Activated CD8-positive, alpha-beta T cell treated with anti-CD3 and anti-CD28 coated beads, Interleukin-2, amount 10 ng/mL, durations not matched to agents 7 days and 5 days (primary cell): ENCODE measurements at regions of chr1 and their contacts with region 1.

Region 1: GRCh38 chr1:209248649-209249279 is 334.8 kb upstream of the CAMK1G start:
- DNase-seq: peak; percentile 65
- ATAC-seq: peak; percentile 55
- H3K4me3 Mint-ChIP-seq: no peak overlapping the region
- H3K27ac Mint-ChIP-seq: no peak overlapping the region
- H3K4me1 Mint-ChIP-seq: no peaks in the 10 kb centered on the region
- H3K27me3 Mint-ChIP-seq: no peaks in the 10 kb centered on the region

Region 2: DNA sequence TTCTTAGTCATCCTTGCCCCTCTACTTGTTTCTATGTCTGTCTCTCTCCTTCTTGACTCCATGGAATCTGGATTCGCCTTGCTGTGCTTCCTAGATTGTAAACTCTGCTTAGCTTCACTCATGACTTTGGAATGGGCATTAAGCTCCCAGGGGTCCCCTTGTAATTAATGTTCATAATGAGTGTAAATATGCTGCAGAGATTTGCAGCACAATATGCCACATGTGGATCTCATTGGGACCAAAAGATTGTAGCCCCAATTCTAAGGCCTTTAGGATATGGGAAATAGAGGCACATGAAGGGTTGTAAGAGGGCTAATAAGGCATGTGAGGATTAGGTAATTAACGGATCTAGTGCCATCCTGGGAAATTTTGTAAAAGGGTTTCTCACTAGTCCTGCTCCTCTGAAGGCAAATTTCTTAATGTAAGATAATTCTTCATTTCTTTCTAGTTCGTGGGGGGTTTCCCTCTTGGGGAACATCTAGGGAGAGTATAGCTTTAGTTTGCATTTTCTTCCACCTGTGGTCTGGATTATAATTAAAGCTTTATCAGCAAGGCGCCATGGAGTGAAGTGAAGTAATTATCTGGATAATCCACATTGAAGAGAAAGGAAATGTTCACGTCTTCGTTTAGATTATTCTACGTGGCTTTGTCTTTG is 345.4 kb before region 1 on chr1:
- CTCF ChIA-PET with region 1: no interaction called
- POLR2A ChIA-PET with region 1: no interaction called
- DNase-seq: no peak
- ATAC-seq: no peak
- H3K4me3 Mint-ChIP-seq: no peak overlapping the region
- H3K27ac Mint-ChIP-seq: no peak overlapping the region
- H3K4me1 Mint-ChIP-seq: no peaks in the 10 kb centered on the region
- H3K27me3 Mint-ChIP-seq: no peaks in the 10 kb centered on the region

Region 3: GRCh38 chr1:209238356-209238755 is 10.4 kb before region 1 on chr1:
- CTCF ChIA-PET with region 1: interaction called, 13 read pairs
- POLR2A ChIA-PET with region 1: no interaction called
- DNase-seq: no peak
- ATAC-seq: no peak
- H3K4me3 Mint-ChIP-seq: no peak overlapping the region
- H3K27ac Mint-ChIP-seq: no peak overlapping the region
- H3K4me1 Mint-ChIP-seq: no peaks in the 10 kb centered on the region
- H3K27me3 Mint-ChIP-seq: no peaks in the 10 kb centered on the region

Region 4: GRCh38 chr1:209260136-209260535 is 11.4 kb after region 1 on chr1:
- CTCF ChIA-PET with region 1: interaction called, 17 read pairs
- POLR2A ChIA-PET with region 1: no interaction called
- DNase-seq: no peak
- ATAC-seq: no peak
- H3K4me3 Mint-ChIP-seq: no peak overlapping the region
- H3K27ac Mint-ChIP-seq: no peak overlapping the region
- H3K4me1 Mint-ChIP-seq: no peaks in the 10 kb centered on the region
- H3K27me3 Mint-ChIP-seq: no peaks in the 10 kb centered on the region

Region 5: DNA sequence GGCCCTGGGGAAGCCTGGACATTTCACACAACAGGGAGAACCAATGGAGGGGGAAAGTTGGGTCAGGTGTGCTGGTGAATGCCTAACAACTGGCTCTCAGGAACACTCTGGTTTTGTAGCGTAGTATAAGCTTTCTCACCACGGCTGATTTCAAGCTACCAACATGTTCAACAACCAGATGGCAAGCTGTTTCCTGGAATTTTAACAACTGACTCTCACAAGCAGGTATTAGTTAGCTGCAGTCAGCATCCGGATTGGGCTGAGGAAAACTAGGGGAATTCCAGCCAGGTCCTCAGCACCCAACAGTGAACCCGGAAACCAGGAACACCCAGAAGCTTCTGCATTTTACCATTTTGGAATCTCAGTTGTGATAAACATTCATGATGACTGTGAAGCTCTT is 172.4 kb after region 1 on chr1:
- CTCF ChIA-PET with region 1: no interaction called
- POLR2A ChIA-PET with region 1: no interaction called
- DNase-seq: no peak
- ATAC-seq: no peak
- H3K4me3 Mint-ChIP-seq: no peak overlapping the region
- H3K27ac Mint-ChIP-seq: no peak overlapping the region
- H3K4me1 Mint-ChIP-seq: peaks cover 6% of the 10 kb centered on the region
- H3K27me3 Mint-ChIP-seq: peaks cover 7% of the 10 kb centered on the region

Region 6: DNA sequence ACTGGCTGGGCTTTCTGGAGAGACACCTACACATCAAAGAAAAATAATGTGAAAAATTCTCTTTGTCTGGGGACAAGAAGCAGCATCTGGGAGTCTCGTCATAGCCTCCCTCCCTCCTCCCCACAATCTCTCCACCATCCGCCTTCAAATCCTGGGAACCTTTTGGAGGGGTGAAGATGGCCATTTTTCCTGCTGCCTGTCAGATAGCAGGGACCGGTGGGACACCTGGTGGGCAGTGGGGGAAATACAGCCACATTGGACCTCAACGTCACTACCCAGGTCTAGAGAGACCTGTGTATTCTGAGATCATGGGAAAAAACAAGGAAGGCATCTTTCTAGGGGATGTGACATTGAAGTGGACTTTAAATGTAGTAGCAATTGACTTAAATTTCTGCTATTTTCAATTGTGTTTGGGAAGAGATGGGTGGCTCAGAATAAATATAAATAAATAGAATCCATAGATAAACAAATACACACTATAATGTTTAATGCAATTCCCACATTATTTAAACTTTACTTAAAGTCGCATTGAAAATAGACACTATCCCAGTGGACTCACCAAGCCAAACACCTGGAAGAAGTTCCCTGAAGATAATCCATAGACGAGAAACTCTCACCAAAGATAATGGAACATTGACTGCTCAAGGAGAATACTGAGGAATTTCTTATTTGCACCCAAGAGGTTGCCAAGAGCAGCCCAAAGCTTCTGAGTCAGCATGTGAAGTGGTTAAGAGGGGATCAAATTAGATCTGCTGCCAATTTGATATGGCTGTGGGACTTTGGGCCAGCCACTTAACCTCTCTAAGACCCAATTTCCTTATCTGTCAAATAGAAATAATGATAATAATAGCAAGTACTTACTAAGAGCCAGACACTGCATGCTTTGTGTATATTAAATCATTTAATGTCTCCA is 187.1 kb after region 1 on chr1:
- CTCF ChIA-PET with region 1: no interaction called
- POLR2A ChIA-PET with region 1: no interaction called
- DNase-seq: peak; percentile 59
- ATAC-seq: peak; percentile 53
- H3K4me3 Mint-ChIP-seq: no peak overlapping the region
- H3K27ac Mint-ChIP-seq: no peak overlapping the region
- H3K4me1 Mint-ChIP-seq: no peaks in the 10 kb centered on the region
- H3K27me3 Mint-ChIP-seq: peaks cover 10% of the 10 kb centered on the region